H1 (cell line): ENCODE measurements at regions of chr16 and their contacts with region 1.

Region 1: DNA sequence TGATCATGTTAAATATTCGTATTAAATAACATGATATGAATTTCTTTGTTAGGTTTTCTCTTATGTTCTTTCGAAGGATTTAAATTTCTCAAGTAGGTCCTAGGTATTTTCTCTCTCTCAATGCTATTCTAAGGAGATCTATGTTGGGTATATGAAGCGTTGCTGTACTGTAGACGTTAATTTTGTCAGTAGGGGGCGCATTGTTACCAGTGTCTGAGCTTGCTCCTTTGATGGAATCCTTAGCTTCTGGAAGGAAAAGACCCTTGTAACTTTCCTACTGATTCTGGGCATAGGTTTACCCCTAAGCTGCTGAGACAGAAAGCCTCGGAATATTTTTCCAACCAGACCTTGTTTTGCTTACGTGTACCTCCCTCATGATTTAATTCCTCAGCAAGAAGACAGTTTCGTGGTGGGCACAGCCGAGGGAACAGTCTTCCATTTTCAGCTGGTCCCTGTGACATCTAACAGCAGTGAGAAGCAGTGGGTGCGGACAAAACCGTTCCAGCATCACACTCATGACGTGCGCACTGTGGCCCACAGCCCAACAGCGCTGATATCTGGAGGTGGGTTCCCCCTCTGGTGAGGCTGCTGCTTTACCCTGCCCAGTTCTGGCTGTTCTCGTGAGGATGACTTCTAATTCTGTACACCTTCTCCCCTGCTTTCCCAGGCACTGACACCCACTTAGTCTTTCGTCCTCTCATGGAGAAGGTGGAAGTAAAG is 17.9 kb downstream of the UTP4 start:
- DNase-seq: peak in 1 of 2 experiments; percentile 57
- H3K4me3 ChIP-seq: no peak overlapping the region
- H3K27ac ChIP-seq: peak overlapping the region; percentile 38; the same call in 1 of the 2 replicates
- H3K4me1 ChIP-seq: no peaks in the 10 kb centered on the region
- H3K27me3 ChIP-seq: no peaks in the 10 kb centered on the region
- CTCF ChIP-seq: peak in 2 of 3 experiments; percentile 66 to 75; a peak in 3 of 4 replicates
- EP300 ChIP-seq: no peak
- POLR2A ChIP-seq: no peak
- RAD21 ChIP-seq: peak; percentile 75 to 81

Region 2: GRCh38 chr16:69132424-69133252 is 17.7 kb before region 1 on chr16 and contains the starts of genes CHTF8 and UTP4:
- CTCF ChIA-PET with region 1: interaction called, 10 read pairs
- POLR2A ChIA-PET with region 1: interaction called, 4 read pairs
- DNase-seq: no peak
- H3K4me3 ChIP-seq: peak within 1 kb of the TSS; percentile 90 to 97 (median 94)
- H3K27ac ChIP-seq: peak within 1 kb of the TSS; percentile 94
- H3K4me1 ChIP-seq: peaks cover 2 to 12% (median 7%) of the 10 kb centered on the region in 4 experiments; a peak in 5 of 7 replicates
- H3K27me3 ChIP-seq: no peaks in the 10 kb centered on the region
- CTCF ChIP-seq: no peak
- EP300 ChIP-seq: no peak; a peak in 1 of 3 replicates
- POLR2A ChIP-seq: peak; percentile 76 to 83
- RAD21 ChIP-seq: no peak
- total RNA-seq, gene CHTF8: 138 and 146 TPM in 2 replicates
- total RNA-seq, gene UTP4: 101 TPM in 2 replicates

Region 3: GRCh38 chr16:69166221-69166833 is 16.0 kb after region 1 on chr16:
- CTCF ChIA-PET with region 1: interaction called, 50 read pairs
- POLR2A ChIA-PET with region 1: interaction called, 4 read pairs
- DNase-seq: no peak
- H3K4me3 ChIP-seq: no peak overlapping the region
- H3K27ac ChIP-seq: no peak overlapping the region
- H3K4me1 ChIP-seq: no peaks in the 10 kb centered on the region; a peak in 1 of 7 replicates
- H3K27me3 ChIP-seq: no peaks in the 10 kb centered on the region
- CTCF ChIP-seq: no peak
- EP300 ChIP-seq: no peak
- POLR2A ChIP-seq: no peak
- RAD21 ChIP-seq: no peak

Region 4: DNA sequence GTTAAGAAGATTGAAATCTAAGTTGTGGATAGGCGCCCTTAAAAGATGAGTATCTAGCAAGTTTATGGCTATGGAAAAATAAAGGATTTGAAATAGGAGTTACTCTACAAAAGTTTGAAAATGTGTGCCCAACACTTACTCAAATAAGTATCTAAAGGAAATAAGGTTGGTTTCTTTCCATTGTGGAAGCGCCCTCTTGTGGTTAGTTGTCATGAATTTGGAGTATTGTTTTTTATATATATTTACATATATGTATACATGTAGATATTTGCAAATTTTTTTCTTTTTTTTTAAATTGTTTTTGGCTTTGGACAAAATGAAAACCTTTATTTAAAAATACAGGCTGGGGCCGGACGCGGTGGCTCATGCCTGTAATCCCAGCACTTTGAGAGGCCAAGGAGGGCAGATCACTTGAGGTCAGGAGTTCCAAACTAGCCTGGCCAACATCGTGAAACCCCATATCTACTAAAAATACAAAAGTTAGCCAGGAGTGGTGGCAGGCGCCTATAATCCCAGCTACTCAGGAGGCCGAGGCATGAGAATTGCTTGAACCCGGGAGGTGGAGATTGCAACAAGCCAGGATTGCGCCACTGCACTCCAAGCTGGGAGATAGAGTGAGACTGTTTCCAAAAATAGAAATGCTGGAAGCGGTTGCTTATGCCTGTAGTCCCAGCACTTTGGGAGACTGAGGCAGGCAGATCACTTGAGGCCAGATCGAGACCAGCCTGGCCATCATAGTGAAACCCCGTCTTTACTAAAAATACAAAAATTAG is 136.8 kb after region 1 on chr16:
- CTCF ChIA-PET with region 1: interaction called, 65 read pairs
- POLR2A ChIA-PET with region 1: no interaction called
- DNase-seq: no peak
- H3K4me3 ChIP-seq: no peak overlapping the region
- H3K27ac ChIP-seq: no peak overlapping the region
- H3K4me1 ChIP-seq: no peaks in the 10 kb centered on the region
- H3K27me3 ChIP-seq: no peaks in the 10 kb centered on the region
- CTCF ChIP-seq: peak in 2 of 3 experiments; percentile 10 to 25; a peak in 2 of 4 replicates
- EP300 ChIP-seq: no peak
- POLR2A ChIP-seq: no peak
- RAD21 ChIP-seq: no peak; a peak in 2 of 4 replicates